Dorsolateral prefrontal cortex (tissue), 120 donors: ENCODE measurements at regions of chr12 and their contacts with region 1.

Region 1: DNA sequence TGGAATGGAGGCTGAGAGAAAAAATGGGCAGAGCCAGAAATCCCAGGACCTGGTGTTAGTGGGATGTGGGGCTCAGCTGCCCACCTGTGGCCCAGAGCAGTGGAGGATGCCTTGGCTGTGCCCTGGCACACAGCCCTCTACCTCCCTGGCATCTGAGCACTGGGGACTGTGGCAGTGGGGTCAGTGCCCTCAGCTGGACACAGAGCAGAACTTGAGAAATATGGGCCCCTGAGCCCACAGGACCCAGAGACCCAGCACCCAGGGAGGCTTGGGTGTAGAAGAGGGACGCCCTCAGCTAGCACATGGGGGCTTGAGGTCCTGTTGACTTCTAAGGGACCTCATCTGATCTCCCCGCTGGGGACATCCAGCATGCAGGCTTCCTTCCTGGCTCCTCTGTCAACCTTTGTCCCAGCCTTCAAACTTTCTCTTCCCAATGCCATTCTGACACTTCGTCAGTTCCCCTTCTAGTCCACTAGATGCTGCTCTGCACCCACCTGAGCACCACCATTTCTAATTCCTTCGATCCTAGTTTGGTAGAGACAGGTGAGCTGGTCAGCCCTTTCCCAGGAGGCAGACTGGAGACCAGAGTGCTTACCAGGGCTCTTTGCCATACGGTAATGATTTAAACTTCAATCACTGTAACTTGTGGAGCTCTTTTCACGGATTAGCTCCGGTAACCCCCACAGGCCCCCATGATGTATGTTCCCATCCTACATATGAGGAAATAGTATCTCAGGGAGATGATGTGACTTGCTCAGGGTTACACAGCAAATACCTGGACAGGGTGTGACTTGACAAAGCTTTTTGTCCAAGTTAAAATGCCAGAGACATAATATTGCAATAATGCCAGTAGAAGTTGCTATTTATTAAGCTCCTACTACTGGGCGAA is 143.7 kb downstream of the ASCL4 start:
- DNase-seq: peak in 2 of 10 donors; percentile 22 to 34
- H3K4me3 ChIP-seq: no peak overlapping the region
- H3K27ac ChIP-seq: no peak overlapping the region
- H3K27me3 ChIP-seq: peaks cover 0 to 36% (median 4%) of the 10 kb centered on the region in 45 donors
- CTCF ChIP-seq: peak in 55 of 56 donors; percentile 27 to 69 (median 55)

Region 2: DNA sequence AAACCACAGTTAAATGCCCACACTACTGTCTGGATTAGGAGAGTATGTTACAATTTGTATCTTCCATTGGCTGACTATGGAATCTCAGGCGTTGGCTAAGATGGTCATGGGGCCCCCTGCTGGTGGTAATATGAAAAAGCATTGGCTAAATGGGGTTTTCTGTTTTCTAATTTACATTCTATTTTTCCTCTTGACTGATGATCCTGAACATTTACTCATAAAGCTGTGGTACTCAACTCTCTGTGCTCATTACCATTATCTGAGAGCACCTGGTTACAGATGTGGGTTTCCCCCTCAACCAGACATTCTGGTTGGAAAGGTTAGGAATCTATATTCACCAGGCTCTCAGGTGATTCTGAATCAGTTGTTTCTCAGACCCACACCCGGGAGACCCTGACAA is 275.8 kb after region 1 on chr12:
- intact Hi-C with region 1: loop called in 1 of 2 experiments (anchors 5 kb)
- DNase-seq: peak in 1 of 10 donors; percentile 47
- H3K4me3 ChIP-seq: no peak overlapping the region
- H3K27ac ChIP-seq: no peak overlapping the region
- H3K27me3 ChIP-seq: no peaks in the 10 kb centered on the region
- CTCF ChIP-seq: peak; percentile 48 to 89 (median 68)